ENCODE measurements at regions of chr2 and their contacts with region 1.

Region 1: GRCh38 chr2:19746611-19747309 is 155.0 kb downstream of the TTC32 start:
- DNase-seq: no peak
- ATAC-seq: peak; percentile 33
- H3K4me3 ChIP-seq: no peak overlapping the region
- H3K27ac ChIP-seq: peak overlapping the region; percentile 73 to 87
- H3K4me1 ChIP-seq: peaks cover 0 to 6% of the 10 kb centered on the region in 2 donors
- H3K27me3 ChIP-seq: no peaks in the 10 kb centered on the region

Region 2: DNA sequence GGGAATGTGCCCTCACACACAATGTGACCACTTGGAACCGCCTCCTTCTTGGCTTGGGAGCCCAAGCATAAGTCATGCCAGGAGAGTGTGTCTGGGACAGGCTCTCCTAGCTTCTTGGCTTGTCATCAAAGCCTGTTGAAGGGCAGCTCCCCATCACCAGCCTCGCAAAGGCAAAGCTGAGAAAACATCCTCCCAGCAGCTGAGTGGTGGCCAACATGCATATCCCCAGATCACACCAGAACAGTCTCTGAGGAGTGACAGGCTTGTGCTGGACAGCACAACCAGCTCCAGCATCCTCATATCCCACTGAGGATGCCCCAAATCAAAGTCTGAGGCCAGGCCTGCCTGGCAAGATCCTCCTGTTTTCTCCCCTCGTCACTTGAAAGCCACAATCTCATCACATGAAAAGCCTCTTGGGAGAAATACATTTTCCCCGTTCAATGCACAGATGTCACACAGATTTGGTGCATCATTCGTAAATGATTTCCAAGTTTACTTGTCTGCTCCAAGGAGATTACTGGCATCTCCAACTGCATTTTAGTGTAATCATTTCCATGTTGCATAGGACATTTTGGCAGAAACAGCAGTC is 114.3 kb before region 1 on chr2:
- intact Hi-C with region 1: no loop called
- DNase-seq: peak in 1 of 2 donors; percentile 59
- ATAC-seq: peak; percentile 34
- H3K4me3 ChIP-seq: no peak overlapping the region
- H3K27ac ChIP-seq: no peak overlapping the region
- H3K4me1 ChIP-seq: no peaks in the 10 kb centered on the region
- H3K27me3 ChIP-seq: no peaks in the 10 kb centered on the region

Region 3: GRCh38 chr2:19685731-19686130 is 61.0 kb before region 1 on chr2:
- intact Hi-C with region 1: loop called in 1 of 2 experiments (anchors 5 kb)
- DNase-seq: no peak
- ATAC-seq: no peak
- H3K4me3 ChIP-seq: no peak overlapping the region
- H3K27ac ChIP-seq: no peak overlapping the region
- H3K4me1 ChIP-seq: peaks cover 0 to 4% of the 10 kb centered on the region in 2 donors
- H3K27me3 ChIP-seq: no peaks in the 10 kb centered on the region

Region 4: GRCh38 chr2:19786408-19787058 is 39.8 kb after region 1 on chr2:
- intact Hi-C with region 1: no loop called
- DNase-seq: no peak
- ATAC-seq: peak; percentile 63
- H3K4me3 ChIP-seq: no peak overlapping the region
- H3K27ac ChIP-seq: peak overlapping the region in 1 of 2 donors; percentile 34
- H3K4me1 ChIP-seq: peaks cover 0 to 8% of the 10 kb centered on the region in 2 donors
- H3K27me3 ChIP-seq: no peaks in the 10 kb centered on the region

Region 5: GRCh38 chr2:19801367-19802080 is 54.8 kb after region 1 on chr2:
- intact Hi-C with region 1: loop called in 1 of 2 experiments (anchors 5 kb)
- DNase-seq: peak; percentile 94 to 97
- ATAC-seq: peak; percentile 88
- H3K4me3 ChIP-seq: no peak overlapping the region
- H3K27ac ChIP-seq: peak overlapping the region; percentile 94 to 99
- H3K4me1 ChIP-seq: no peaks in the 10 kb centered on the region
- H3K27me3 ChIP-seq: no peaks in the 10 kb centered on the region

Measured in aorta (tissue), 5 donors.